Common myeloid progenitor, CD34-positive (primary cell): ENCODE measurements at regions of chr22 and their contacts with region 1.

Region 1: DNA sequence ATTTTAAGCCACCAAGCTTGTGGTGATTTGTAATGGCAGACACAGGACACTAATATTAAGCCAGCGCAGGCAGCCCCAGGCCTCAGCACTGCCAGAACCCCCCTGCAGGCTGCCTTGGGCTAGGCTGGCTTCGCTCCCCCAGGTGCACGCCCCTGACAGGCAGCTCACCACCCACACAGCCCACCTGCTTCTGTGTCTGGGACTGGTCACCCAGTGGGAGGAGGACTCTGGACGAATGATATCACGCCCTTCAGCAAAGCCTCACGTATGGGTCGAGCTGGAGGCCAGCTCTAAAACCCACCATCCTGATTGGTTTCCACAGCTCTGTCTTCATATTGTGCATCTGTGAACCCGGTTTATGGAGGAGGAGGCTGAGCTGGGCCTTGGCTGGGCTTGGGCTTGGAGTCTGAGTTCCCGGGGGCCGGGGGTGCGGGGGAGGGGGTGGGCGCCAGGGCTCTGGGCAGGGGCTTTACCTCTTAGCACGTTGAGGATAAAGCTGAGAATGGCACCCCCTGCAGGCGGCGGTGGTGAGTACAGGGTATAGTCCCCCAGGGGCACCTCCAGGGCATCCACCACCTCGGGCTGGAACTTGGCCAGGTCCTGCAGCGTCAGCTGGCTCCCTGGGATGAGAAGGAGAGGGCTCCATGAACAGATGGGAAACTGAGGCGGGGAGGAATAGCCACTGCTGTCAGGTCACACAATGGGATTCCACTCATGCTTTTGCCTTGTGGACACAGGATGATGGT is 13.8 kb downstream of the GGT5 start:
- DNase-seq: peak; percentile 39 to 70 (median 53)
- H3K4me3 ChIP-seq: no peak overlapping the region
- H3K27ac ChIP-seq: no peak overlapping the region
- H3K4me1 ChIP-seq: peaks cover 0 to under 1% (median 0%) of the 10 kb centered on the region in 4 experiments
- H3K27me3 ChIP-seq: no peaks in the 10 kb centered on the region

Region 2: DNA sequence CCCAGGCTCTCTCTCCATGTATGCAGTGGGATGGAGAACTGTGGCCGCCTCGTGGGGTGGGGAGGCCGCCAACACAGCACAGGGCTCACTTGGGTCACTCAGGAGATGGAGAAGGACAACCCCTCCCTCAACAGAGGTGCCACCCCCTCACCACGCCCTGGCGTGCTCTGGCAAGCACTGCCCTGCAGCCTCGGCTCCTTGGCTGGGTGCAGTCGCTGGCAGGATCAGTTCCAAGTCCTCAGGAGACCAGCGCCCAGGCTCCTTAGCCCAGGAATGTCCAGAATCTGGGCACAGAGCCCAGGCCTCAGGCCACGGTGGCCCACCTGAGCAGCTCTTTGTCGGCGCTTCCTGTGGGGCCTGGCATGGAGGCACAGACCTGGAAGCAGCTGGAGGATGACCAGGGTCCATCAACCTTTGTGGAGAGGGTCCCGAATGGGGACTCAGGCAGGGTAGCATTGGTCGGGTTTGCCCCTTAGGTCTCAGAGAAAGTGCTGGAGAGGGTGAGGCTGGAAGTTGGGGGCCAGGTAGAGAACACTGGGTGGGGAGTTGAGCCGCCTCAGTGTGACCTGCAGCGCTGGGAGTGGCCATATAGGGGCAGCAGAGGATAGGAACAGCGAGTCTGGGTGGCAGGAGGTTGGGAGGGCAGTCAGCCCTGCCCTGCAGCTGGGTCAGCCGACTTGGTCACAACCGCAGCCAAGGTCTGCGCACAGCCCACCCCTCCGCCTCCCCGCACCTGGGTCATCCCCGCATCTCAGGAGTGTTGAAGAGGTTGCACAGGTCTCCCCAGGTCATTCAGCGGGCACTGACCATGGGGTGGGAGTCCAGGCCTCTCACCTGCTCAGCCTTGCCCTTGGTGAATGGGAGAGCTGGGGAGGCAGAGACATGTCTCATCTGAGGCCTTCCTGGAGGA is 41.6 kb before region 1 on chr22:
- CTCF ChIA-PET with region 1: interaction called, 40 read pairs
- POLR2A ChIA-PET with region 1: no interaction called
- DNase-seq: peak; percentile 31 to 62 (median 50)
- H3K4me3 ChIP-seq: peak overlapping the region in 1 of 7 experiments; percentile 51
- H3K27ac ChIP-seq: no peak overlapping the region
- H3K4me1 ChIP-seq: peaks cover 0 to 8% (median 2%) of the 10 kb centered on the region in 4 experiments
- H3K27me3 ChIP-seq: no peaks in the 10 kb centered on the region

Region 3: GRCh38 chr22:24219750-24220149 is 11.3 kb before region 1 on chr22:
- CTCF ChIA-PET with region 1: interaction called, 12 read pairs
- POLR2A ChIA-PET with region 1: no interaction called
- DNase-seq: no peak
- H3K4me3 ChIP-seq: no peak overlapping the region
- H3K27ac ChIP-seq: no peak overlapping the region
- H3K4me1 ChIP-seq: peaks cover 0 to 9% (median 2%) of the 10 kb centered on the region in 4 experiments
- H3K27me3 ChIP-seq: no peaks in the 10 kb centered on the region

Region 4: GRCh38 chr22:24270638-24271408 is 39.7 kb after region 1 on chr22 and contains the start of gene SPECC1L:
- CTCF ChIA-PET with region 1: no interaction called
- POLR2A ChIA-PET with region 1: no interaction called
- DNase-seq: peak; percentile 86 to 91 (median 90)
- H3K4me3 ChIP-seq: peak within 1 kb of the TSS; percentile 83 to 100 (median 93)
- H3K27ac ChIP-seq: peak within 1 kb of the TSS; percentile 72 to 86
- H3K4me1 ChIP-seq: peaks cover 0 to 27% (median 19%) of the 10 kb centered on the region in 4 experiments
- H3K27me3 ChIP-seq: no peaks in the 10 kb centered on the region

Region 5: DNA sequence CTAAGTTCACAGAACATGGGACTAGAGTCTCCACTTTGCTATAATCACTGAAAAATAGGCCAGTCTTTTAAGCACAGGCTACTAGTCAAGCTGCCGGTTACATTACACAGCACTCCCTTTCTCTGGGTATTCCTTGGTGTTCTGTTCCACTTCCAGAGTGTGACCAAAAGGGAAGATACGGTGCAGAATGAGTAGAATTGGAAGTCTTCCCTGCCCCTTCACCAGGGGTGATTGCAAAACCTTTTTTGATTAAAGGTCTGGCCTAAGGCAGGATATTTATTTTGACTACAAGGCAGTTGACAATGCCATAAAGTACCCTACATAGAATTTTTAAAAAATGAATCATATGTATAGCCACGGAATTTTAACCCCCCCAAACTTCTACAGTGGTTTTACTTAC is 136.8 kb after region 1 on chr22:
- CTCF ChIA-PET with region 1: no interaction called
- POLR2A ChIA-PET with region 1: no interaction called
- DNase-seq: no peak
- H3K4me3 ChIP-seq: no peak overlapping the region
- H3K27ac ChIP-seq: no peak overlapping the region
- H3K4me1 ChIP-seq: no peaks in the 10 kb centered on the region
- H3K27me3 ChIP-seq: no peaks in the 10 kb centered on the region